T-cell (primary cell): ENCODE measurements at regions of chr3 and their contacts with region 1.

Region 1: GRCh38 chr3:9792405-9793160 is at the starts of genes ARPC4 and TADA3:
- DNase-seq: peak; percentile 78 to 95 (median 89)
- ATAC-seq: peak; percentile 84 to 89 (median 86)
- H3K4me3 ChIP-seq: peak within 1 kb of the TSS; percentile 82 to 92
- H3K4me3 Mint-ChIP-seq: peak within 1 kb of the TSS; percentile 95 to 99 (median 96)
- H3K27ac ChIP-seq: peak within 1 kb of the TSS; percentile 87
- H3K27ac Mint-ChIP-seq: peak within 1 kb of the TSS; percentile 100
- H3K4me1 ChIP-seq: peaks cover 29 to 57% of the 10 kb centered on the region in 2 experiments
- H3K4me1 Mint-ChIP-seq: peaks cover 70 to 76% (median 73%) of the 10 kb centered on the region in 3 donors
- H3K27me3 ChIP-seq: no peaks in the 10 kb centered on the region
- H3K27me3 Mint-ChIP-seq: no peaks in the 10 kb centered on the region
- total RNA-seq, gene ARPC4: 144 to 160 (median 147) TPM
- total RNA-seq, gene TADA3: 29.1 to 46.5 (median 41.1) TPM

Region 2: DNA sequence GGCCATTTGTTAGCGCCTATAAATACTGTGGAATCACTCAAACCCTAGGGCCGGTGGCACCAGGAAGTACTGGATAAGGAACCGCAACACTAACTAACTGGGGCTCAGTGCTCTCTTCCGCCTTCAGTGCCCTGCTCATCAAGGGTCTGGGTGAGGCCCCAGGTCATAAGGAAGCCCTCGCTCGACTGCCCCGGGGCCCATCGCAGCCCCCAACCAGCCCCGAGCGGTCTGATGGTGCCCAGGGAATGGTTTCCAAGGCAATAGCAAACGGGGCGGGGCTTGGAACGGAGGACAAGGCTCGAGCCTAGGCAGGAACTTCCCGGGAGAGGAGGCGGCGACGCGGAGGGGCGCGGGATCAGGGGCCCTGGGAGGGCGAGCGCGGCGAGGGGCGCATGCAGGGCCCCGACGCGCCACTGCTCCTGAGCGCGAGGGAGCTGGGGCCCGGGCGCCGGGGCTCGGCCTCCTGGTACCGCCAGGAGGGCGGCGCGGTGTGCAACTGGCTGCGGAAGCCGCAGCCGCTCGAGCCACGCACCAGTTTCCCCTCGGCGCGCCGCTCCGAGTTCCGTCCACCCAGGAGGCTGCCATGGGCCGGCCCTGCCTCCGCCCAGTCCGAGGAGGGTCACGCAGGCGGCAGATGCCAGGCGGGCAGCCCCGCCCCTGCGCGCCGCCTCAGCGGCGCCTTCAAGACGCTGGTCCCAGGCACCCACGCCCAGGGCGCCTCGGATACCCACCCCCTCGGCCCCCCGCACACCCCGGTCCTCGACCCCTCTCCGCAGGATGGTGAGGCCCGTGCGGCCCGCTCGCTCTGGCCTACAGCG is 17.2 kb after region 1 on chr3 and contains the start of gene TTLL3:
- CTCF ChIA-PET with region 1: interaction called in 1 of 2 experiments, 5 read pairs
- POLR2A ChIA-PET with region 1: interaction called in 1 of 2 experiments, 10 read pairs
- DNase-seq: peak in 34 of 35 experiments; percentile 14 to 63 (median 35)
- ATAC-seq: peak; percentile 74 to 76 (median 74)
- H3K4me3 ChIP-seq: peak within 1 kb of the TSS; percentile 64 to 71
- H3K4me3 Mint-ChIP-seq: peak within 1 kb of the TSS; percentile 82 to 91 (median 90)
- H3K27ac ChIP-seq: peak within 1 kb of the TSS; percentile 87
- H3K27ac Mint-ChIP-seq: peak within 1 kb of the TSS; percentile 99 to 100
- H3K4me1 ChIP-seq: peaks cover 3 to 30% of the 10 kb centered on the region in 2 experiments
- H3K4me1 Mint-ChIP-seq: peaks cover 35 to 48% (median 46%) of the 10 kb centered on the region in 3 donors
- H3K27me3 ChIP-seq: no peaks in the 10 kb centered on the region
- H3K27me3 Mint-ChIP-seq: no peaks in the 10 kb centered on the region
- total RNA-seq, gene TTLL3: 59.8 to 94.9 (median 67.4) TPM

Region 3: DNA sequence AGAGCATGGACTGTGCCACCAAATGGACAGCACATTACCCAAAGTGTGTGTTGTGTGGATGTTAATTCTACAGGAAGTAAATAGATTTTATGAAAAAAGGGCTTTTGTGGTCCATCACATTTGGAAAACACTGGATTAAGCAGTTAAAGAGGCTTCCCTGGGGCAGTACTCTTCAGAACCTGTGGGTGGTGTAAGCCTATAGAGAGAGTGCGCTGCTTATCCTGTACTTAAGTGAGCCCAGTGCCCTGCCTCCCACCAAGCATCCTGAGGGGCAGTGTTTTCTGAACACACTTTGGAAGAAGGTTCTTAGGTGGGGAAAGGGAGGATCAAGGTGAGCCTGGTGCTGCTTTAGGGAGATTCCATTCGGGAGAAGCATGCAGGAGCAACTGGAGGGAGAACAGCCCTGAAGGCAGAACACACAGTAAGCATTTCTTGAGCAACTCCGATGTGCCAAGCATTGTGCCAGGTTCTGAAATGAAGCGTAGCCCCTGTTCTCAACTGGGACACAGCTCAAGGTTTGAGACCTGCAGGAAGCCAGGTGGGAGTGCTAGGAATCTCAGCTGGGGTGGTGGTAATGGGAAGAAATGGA is 28.5 kb after region 1 on chr3:
- CTCF ChIA-PET with region 1: no interaction called
- POLR2A ChIA-PET with region 1: no interaction called
- DNase-seq: no peak
- ATAC-seq: peak in 1 of 4 experiments; percentile 38
- H3K4me3 ChIP-seq: no peak overlapping the region
- H3K4me3 Mint-ChIP-seq: no peak overlapping the region
- H3K27ac ChIP-seq: no peak overlapping the region
- H3K27ac Mint-ChIP-seq: no peak overlapping the region
- H3K4me1 ChIP-seq: no peaks in the 10 kb centered on the region
- H3K4me1 Mint-ChIP-seq: peaks cover 0 to 4% (median 0%) of the 10 kb centered on the region in 3 donors
- H3K27me3 ChIP-seq: no peaks in the 10 kb centered on the region
- H3K27me3 Mint-ChIP-seq: no peaks in the 10 kb centered on the region

Region 4: GRCh38 chr3:10122724-10123123 is 330.1 kb after region 1 on chr3:
- CTCF ChIA-PET with region 1: no interaction called
- POLR2A ChIA-PET with region 1: interaction called in 1 of 2 experiments, 10 read pairs
- DNase-seq: no peak
- ATAC-seq: no peak
- H3K4me3 ChIP-seq: no peak overlapping the region
- H3K4me3 Mint-ChIP-seq: no peak overlapping the region
- H3K27ac ChIP-seq: no peak overlapping the region
- H3K27ac Mint-ChIP-seq: peak overlapping the region in 1 of 2 donors; percentile 0
- H3K4me1 ChIP-seq: peaks cover 0 to 10% of the 10 kb centered on the region in 2 experiments
- H3K4me1 Mint-ChIP-seq: peaks cover 38 to 49% (median 49%) of the 10 kb centered on the region in 3 donors
- H3K27me3 ChIP-seq: no peaks in the 10 kb centered on the region
- H3K27me3 Mint-ChIP-seq: no peaks in the 10 kb centered on the region

Region 5: GRCh38 chr3:10248184-10249080 is 455.8 kb after region 1 on chr3 and contains the start of gene TATDN2:
- CTCF ChIA-PET with region 1: no interaction called
- POLR2A ChIA-PET with region 1: interaction called in 1 of 2 experiments, 10 read pairs
- DNase-seq: peak; percentile 82 to 97 (median 87)
- ATAC-seq: peak; percentile 94 to 97 (median 96)
- H3K4me3 ChIP-seq: peak within 1 kb of the TSS; percentile 96 to 99
- H3K4me3 Mint-ChIP-seq: peak within 1 kb of the TSS; percentile 92 to 99 (median 97)
- H3K27ac ChIP-seq: peak within 1 kb of the TSS; percentile 73
- H3K27ac Mint-ChIP-seq: peak within 1 kb of the TSS; percentile 93 to 97
- H3K4me1 ChIP-seq: peaks cover 23 to 53% of the 10 kb centered on the region in 2 experiments
- H3K4me1 Mint-ChIP-seq: peaks cover 51 to 58% (median 54%) of the 10 kb centered on the region in 3 donors
- H3K27me3 ChIP-seq: no peaks in the 10 kb centered on the region
- H3K27me3 Mint-ChIP-seq: no peaks in the 10 kb centered on the region
- total RNA-seq, gene TATDN2: 58.9 to 82.3 (median 79.9) TPM

Region 6: DNA sequence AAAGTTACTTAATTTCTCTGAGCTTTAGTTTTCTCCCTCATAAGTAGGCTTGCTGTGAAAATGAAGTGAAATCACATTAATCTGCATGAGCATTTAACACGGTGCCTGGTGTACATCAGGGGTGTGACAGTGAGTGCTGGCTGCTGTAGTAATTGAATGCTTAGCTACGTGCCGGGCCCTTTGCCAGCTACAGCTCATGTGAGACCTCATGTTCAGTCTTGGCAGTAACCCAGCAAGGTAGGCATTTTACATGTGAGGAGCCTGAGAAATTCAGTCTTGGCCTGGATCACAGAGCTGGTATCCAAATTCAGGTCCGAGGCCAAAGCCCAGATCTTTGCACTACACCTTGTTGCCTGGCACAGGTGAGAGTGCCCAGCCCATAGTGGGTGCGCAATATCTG is 491.1 kb after region 1 on chr3:
- CTCF ChIA-PET with region 1: no interaction called
- POLR2A ChIA-PET with region 1: no interaction called
- DNase-seq: no peak
- ATAC-seq: no peak
- H3K4me3 ChIP-seq: no peak overlapping the region
- H3K4me3 Mint-ChIP-seq: no peak overlapping the region
- H3K27ac ChIP-seq: no peak overlapping the region
- H3K27ac Mint-ChIP-seq: peak overlapping the region; percentile 52 to 77
- H3K4me1 ChIP-seq: peaks cover 3 to 18% of the 10 kb centered on the region in 2 experiments
- H3K4me1 Mint-ChIP-seq: peaks cover 22 to 36% (median 29%) of the 10 kb centered on the region in 3 donors
- H3K27me3 ChIP-seq: no peaks in the 10 kb centered on the region
- H3K27me3 Mint-ChIP-seq: no peaks in the 10 kb centered on the region